ENCODE measurements at regions of chr15 and their contacts with region 1.

Region 1: DNA sequence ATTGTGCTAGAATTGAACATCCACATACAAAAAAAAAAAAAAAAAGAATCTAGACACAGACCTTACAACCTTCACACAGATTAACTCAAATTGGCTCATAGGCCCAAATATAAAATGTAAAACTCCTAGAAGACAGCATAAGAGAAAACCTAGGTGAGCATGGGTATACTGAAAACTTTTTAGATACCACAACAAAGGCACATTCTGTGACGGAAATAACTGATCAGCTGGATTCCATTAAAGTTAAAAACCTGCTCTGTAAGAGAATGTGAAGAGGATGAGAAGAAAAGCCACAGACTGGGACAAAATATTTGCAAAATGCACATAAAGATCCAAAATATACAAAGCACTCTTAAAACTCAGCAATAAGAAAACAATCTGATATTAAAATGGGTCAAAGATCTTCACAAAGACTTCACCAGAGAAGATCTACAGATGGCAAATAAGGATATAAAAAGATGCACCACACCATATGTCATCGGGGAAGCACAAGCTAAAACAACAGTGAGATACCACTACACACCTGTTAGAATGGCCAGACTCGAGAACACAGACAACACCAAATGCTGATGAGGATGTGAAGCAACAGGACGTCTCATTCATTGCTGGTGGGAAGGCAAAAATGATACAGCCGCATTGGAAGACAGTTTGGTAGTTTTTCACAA is 167.9 kb downstream of the PDE8A start:
- DNase-seq: no peak
- CTCF ChIP-seq: no peak

Region 2: DNA sequence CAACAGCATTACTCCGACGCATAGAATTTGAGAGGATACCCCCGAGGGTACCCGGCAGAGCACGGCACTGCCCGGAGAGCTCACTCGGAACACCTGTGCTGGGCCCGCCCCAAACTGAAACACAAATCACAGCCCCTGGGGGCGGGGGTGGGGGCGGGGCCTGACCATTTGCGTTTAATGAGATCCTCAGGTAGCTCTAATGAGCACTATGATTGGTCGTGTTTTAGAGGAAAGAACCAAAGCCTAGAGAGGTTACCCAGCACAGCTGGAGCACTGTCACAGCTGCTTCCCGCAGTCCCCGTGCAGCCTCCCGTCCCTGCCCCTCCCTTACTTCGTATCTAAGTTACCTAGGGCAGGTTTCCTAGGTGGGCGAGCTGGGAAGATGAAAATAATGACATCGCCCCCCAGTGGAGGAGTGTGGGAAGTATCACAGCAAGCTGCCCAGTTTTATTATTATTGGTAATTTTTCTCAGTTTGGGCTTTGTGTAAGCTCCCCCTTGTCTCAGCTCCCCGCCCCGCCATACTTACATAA is 19.1 kb after region 1 on chr15:
- CTCF ChIA-PET with region 1: interaction called, 11 read pairs
- POLR2A ChIA-PET with region 1: no interaction called
- DNase-seq: peak; percentile 56
- CTCF ChIP-seq: peak; percentile 57

Region 3: GRCh38 chr15:85276911-85277310 is 127.3 kb after region 1 on chr15:
- CTCF ChIA-PET with region 1: no interaction called
- POLR2A ChIA-PET with region 1: no interaction called
- DNase-seq: no peak
- CTCF ChIP-seq: no peak

Region 4: GRCh38 chr15:85333231-85333846 is 183.7 kb after region 1 on chr15:
- CTCF ChIA-PET with region 1: no interaction called
- POLR2A ChIA-PET with region 1: no interaction called
- DNase-seq: no peak
- CTCF ChIP-seq: no peak